IMR-90 (cell line): ENCODE measurements at regions of chr3 and their contacts with region 1.

Region 1: GRCh38 chr3:140941434-140942220 is at the start of gene SLC25A36:
- DNase-seq: peak; percentile 98
- ATAC-seq: peak; percentile 97
- H3K4me3 ChIP-seq: peak within 1 kb of the TSS; percentile 82
- H3K27ac ChIP-seq: peak within 1 kb of the TSS; percentile 89
- H3K4me1 ChIP-seq: no peaks in the 10 kb centered on the region
- H3K27me3 ChIP-seq: no peaks in the 10 kb centered on the region
- CTCF ChIP-seq: no peak
- POLR2A ChIP-seq: peak; percentile 82
- RAD21 ChIP-seq: no peak
- total RNA-seq, gene SLC25A36: 70.3 and 76.7 TPM in 2 replicates

Region 2: DNA sequence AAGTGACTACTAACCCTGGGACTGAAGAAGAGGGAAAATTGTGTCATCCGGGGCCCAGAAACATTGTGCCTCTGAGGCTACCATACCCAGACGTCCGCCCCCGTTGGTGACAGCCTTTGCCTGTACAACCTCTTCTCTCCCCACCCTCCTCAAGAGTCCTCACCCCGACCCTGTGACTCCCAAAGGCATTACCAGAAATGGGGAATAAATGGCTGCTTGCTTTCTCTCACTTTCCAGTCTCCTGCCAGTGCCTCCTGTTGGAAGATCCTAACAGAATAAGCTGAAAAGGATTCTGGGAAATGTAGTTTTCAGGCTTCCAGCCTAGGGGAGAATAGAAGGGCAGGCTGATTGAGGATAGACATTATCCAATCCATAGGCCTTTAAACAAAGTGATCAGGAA is 30.8 kb before region 1 on chr3:
- CTCF ChIA-PET with region 1: no interaction called
- POLR2A ChIA-PET with region 1: no interaction called
- dilution Hi-C with region 1: no loop called
- in situ Hi-C with region 1: no loop called
- intact Hi-C with region 1: no loop called
- DNase-seq: peak; percentile 7
- ATAC-seq: peak; percentile 40
- H3K4me3 ChIP-seq: peak overlapping the region; percentile 34
- H3K27ac ChIP-seq: no peak overlapping the region
- H3K4me1 ChIP-seq: no peaks in the 10 kb centered on the region
- H3K27me3 ChIP-seq: peaks cover 2% of the 10 kb centered on the region
- CTCF ChIP-seq: no peak
- POLR2A ChIP-seq: no peak
- RAD21 ChIP-seq: no peak

Region 3: GRCh38 chr3:140922634-140923033 is 19.0 kb before region 1 on chr3:
- CTCF ChIA-PET with region 1: no interaction called
- POLR2A ChIA-PET with region 1: no interaction called
- dilution Hi-C with region 1: no loop called
- in situ Hi-C with region 1: no loop called
- intact Hi-C with region 1: no loop called
- DNase-seq: peak; percentile 49
- ATAC-seq: peak; percentile 91
- H3K4me3 ChIP-seq: no peak overlapping the region
- H3K27ac ChIP-seq: no peak overlapping the region
- H3K4me1 ChIP-seq: no peaks in the 10 kb centered on the region
- H3K27me3 ChIP-seq: peaks cover 6% of the 10 kb centered on the region
- CTCF ChIP-seq: peak; percentile 62
- POLR2A ChIP-seq: no peak
- RAD21 ChIP-seq: peak; percentile 61

Region 4: DNA sequence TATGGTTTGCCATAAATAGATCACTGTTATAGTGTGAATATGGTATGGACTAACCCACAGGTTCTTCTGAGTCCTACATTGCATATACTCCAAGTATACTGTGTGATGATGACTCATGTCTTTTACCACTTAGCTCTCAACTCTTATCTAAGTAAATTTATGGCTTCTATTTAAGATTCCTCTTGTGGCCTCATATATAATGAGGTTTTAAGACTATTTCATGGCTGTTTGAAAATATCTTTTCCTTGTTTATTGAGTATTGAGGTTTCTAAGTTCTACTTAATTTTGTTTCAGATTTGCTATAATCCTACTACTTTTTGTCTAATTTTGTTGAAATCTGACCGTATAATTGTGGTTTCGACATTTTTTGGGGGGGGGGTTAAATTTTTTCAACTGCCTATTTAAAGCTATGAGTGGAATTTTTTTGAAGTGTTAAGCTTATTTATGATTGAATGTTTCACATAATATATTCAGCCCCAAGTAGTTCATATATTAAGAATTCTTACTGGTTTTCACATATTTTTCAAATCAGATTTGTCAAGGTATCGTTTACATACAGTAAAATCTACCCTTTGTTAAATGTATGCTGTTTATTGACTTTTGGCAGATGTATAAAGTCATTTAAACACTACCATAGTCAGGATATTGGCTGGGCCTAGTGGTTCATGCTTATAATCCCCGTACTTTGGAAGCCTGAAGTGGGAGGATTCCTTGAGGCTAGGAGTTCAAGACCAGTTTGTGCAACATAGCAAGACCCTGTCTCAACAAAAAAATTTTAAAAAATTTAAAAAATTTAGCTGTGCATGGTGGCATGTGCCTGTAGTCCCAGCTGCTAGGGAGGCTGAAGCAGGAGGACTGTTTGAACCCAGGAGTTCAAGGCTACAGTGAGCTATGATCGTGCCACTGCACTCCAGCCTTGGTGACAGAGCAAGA is 11.7 kb after region 1 on chr3:
- CTCF ChIA-PET with region 1: interaction called, 3 read pairs
- POLR2A ChIA-PET with region 1: interaction called, 3 read pairs
- dilution Hi-C with region 1: no loop called
- in situ Hi-C with region 1: no loop called
- intact Hi-C with region 1: loop called (anchors 2 kb)
- DNase-seq: peak; percentile 81
- ATAC-seq: peak; percentile 66
- H3K4me3 ChIP-seq: no peak overlapping the region
- H3K27ac ChIP-seq: peak overlapping the region; percentile 44; the same call in 1 of the 2 replicates
- H3K4me1 ChIP-seq: peaks cover 16% of the 10 kb centered on the region
- H3K27me3 ChIP-seq: no peaks in the 10 kb centered on the region
- CTCF ChIP-seq: no peak
- POLR2A ChIP-seq: no peak
- RAD21 ChIP-seq: no peak